Psoas muscle (tissue), 8 donors: ENCODE measurements at regions of chr2 and their contacts with region 1.

Region 1: DNA sequence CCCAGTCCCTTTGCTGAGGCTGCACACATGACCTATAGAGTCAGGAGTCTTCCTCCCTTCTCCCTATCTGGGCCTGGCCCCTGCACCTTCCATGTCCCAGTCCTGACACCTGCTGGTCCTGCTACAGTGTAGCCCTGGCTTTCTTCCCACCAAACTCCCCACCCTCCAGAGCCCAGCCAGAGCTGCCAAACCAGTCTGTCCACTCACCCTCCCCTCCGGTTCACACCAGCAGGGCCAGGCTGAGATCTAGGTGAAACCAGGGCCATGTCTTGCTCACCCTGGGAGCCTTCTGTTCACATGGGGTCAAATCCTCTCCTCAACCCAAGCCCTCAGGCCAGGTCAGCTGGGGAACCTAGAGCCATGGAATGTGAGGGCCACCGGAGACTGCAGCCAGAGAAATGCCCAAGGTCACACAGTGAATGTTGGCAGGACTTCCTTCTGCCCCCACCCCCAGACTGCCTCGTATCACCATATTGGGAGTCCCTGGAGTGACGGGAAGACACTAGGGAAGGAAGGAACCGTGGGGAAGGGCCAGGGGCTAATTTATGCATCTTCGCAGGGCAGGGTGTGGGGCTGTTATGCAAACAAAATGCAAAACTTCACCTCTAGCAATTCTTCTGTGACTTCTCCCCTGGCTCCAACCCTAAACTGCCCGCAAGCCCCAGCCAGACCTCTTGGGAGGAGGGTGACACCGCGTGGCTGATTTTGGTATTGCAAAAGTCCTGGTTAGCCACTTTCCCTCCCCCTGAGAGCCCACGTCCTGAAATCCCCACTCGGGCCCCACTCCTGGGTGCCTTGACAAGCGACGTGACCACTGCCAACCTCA is 14.6 kb downstream of the TNS1 start:
- DNase-seq: peak; percentile 84 to 93
- ATAC-seq: peak; percentile 81 to 87 (median 84)
- H3K4me3 ChIP-seq: peak overlapping the region; percentile 38
- H3K27ac ChIP-seq: peak overlapping the region; percentile 73
- H3K4me1 ChIP-seq: peaks cover 17% of the 10 kb centered on the region
- H3K27me3 ChIP-seq: no peaks in the 10 kb centered on the region
- CTCF ChIP-seq: peak; percentile 89

Region 2: DNA sequence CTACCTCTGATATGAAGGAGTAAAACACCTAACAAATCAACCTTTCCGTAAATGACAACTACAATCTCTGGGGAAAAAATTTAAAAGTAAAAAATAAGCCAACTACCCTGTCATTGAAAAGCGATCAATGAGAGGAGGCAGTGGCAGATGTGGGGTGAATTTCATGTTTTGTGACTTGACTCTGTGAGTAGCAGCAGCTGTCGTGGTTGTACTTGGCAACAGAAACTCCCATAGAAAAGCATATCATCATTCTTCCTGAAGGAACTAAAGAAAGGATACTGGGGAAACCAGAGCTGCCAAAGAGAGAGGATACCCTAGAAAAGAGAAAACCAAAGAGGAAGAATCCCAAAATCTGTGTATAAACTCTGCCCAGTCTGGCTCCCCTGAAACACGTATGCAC is 221.9 kb before region 1 on chr2:
- intact Hi-C with region 1: no loop called
- DNase-seq: no peak
- ATAC-seq: no peak
- H3K4me3 ChIP-seq: no peak overlapping the region
- H3K27ac ChIP-seq: no peak overlapping the region
- H3K4me1 ChIP-seq: no peaks in the 10 kb centered on the region
- H3K27me3 ChIP-seq: no peaks in the 10 kb centered on the region
- CTCF ChIP-seq: no peak

Region 3: GRCh38 chr2:217886720-217887309 is 101.4 kb before region 1 on chr2:
- intact Hi-C with region 1: loop called in 1 of 2 experiments (anchors 2 kb)
- DNase-seq: peak; percentile 82 to 89
- ATAC-seq: peak; percentile 48 to 74 (median 63)
- H3K4me3 ChIP-seq: no peak overlapping the region
- H3K27ac ChIP-seq: no peak overlapping the region
- H3K4me1 ChIP-seq: peaks cover 28% of the 10 kb centered on the region
- H3K27me3 ChIP-seq: no peaks in the 10 kb centered on the region
- CTCF ChIP-seq: peak; percentile 85

Region 4: DNA sequence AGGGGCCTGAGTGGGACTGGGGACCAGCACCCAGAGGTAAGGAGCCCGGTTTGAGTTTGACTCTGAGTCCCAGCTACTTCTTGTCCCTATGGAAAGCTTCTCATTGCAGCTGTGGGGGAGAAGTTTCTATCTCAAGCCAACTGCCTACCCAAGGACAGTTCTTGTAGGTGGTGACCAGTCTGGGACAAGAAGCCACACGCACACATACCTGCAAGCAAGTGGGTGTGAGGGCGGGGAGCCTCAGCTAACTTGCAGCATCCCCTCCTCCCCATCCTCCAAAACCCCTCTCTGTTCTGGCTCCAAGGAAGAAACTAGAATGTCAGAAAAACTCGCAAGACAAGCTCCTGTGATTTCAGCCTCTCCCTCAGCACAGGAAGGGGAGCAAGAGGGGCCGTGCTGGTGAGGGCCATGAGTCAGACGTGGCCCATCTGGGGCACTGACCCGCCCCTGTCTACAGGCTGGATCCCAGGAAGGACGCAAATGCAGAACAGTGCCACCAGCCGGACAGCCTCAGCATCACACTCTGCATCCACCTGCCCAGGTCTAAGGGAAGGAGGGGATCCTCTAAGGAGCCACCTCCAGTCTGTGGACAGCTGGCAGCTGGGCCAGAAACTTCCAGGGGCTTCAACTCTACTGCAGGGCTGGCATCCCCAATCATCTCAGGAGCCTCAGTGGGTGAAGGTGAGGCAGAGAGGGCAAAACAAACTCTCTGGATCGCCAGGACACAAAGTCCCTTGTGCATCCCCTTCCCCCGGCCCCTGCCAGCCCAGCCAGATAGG is 88.8 kb before region 1 on chr2:
- intact Hi-C with region 1: loop called in 1 of 2 experiments (anchors 5 kb)
- DNase-seq: peak; percentile 86 to 90
- ATAC-seq: peak; percentile 42 to 61 (median 57)
- H3K4me3 ChIP-seq: no peak overlapping the region
- H3K27ac ChIP-seq: peak overlapping the region; percentile 89
- H3K4me1 ChIP-seq: peaks cover 73% of the 10 kb centered on the region
- H3K27me3 ChIP-seq: no peaks in the 10 kb centered on the region
- CTCF ChIP-seq: peak; percentile 60

Region 5: DNA sequence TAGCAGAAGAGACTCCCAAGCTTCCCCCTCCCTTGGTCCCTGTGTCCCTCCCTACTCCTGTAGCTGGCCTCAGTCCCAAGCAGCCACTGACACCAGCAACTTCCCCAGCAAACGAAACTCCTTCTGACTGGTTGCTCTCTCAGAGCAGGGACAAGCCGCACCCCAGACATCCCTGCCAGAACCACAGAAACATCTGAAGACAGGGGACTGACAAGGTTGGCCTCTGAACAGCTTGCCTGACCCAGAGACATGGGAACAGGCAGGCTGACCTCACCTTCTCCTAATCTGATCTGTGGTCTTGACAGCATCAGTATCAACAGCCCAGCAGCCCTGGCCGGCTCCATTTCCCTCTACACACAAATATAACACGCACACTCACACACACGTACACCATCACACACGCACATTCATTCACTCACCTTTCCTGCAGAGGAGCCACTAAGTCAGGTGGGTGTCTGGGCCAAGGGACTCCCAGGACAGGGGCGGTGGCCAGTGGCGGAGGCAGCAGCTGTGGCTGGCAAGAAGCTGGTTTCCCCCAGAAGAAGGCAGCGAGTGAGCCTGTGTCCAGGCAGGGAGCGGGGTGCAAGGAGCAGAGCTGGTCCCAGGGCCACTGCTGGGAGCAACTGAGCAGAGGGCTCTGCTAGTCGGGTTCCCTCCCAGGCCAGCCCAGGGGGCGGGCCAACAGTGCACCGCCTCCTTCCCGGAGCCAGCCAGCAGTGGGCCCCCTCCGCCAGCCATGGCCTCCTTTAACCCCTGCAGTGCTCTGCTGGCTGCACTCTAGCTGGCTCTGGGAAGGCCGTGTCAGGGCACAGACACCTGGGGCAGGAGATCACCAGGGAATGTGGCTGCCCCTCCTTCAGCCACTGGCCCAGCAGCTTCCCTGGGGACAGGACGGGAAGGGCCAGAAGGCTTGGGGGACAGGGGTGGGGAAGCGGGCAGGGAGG is 44.5 kb before region 1 on chr2:
- intact Hi-C with region 1: loop called (anchors 5 kb)
- DNase-seq: peak; percentile 80 to 91
- ATAC-seq: peak; percentile 81 to 91 (median 88)
- H3K4me3 ChIP-seq: peak overlapping the region; percentile 75
- H3K27ac ChIP-seq: peak overlapping the region; percentile 87
- H3K4me1 ChIP-seq: peaks cover 51% of the 10 kb centered on the region
- H3K27me3 ChIP-seq: no peaks in the 10 kb centered on the region
- CTCF ChIP-seq: peak; percentile 20

Region 6: GRCh38 chr2:219079417-219079816 is 1091.2 kb after region 1 on chr2:
- intact Hi-C with region 1: no loop called
- DNase-seq: no peak
- ATAC-seq: no peak
- H3K4me3 ChIP-seq: no peak overlapping the region
- H3K27ac ChIP-seq: no peak overlapping the region
- H3K4me1 ChIP-seq: no peaks in the 10 kb centered on the region
- H3K27me3 ChIP-seq: no peaks in the 10 kb centered on the region
- CTCF ChIP-seq: no peak